Posterior cingulate gyrus (tissue), 11 donors: ENCODE measurements at regions of chr12 and their contacts with region 1.

Region 1: GRCh38 chr12:118821386-118821925 is 159.9 kb upstream of the SRRM4 start:
- DNase-seq: no peak

Region 2: DNA sequence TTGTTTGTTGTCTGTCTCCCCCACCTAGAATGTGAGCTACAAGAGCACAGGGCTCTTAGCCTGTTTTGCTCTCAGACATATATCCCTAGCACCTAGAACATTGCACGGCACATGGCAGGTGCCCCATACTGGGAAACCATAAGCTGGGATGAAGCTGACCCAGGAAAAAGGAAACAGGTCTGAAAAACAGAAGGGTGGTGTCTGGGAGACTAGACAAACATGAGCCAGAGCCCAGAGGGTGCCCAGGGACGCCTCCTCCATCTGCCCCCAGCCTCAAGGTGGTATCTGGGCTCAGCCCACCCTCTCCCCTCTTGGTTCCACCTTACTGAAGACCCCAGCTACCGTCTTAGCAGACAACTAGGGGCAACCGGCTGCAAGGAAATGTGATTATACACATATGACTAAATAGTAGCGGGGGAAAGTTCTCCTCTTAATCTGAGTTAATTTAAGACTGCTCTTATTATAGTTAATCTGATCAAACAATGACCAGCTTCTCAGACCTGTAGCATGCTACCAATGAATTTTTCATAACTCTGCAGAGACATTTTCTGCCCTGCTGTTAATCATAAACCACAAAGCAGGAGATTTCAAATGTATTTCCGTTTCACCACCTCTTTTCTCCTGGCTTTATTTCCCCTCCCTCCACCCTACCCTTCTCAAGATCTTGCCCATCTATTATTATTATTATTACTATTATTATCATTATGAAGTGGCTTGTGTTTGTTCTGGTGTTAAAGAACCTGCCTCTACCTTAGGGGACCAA is 884.6 kb before region 1 on chr12:
- intact Hi-C with region 1: no loop called
- DNase-seq: no peak

Region 3: DNA sequence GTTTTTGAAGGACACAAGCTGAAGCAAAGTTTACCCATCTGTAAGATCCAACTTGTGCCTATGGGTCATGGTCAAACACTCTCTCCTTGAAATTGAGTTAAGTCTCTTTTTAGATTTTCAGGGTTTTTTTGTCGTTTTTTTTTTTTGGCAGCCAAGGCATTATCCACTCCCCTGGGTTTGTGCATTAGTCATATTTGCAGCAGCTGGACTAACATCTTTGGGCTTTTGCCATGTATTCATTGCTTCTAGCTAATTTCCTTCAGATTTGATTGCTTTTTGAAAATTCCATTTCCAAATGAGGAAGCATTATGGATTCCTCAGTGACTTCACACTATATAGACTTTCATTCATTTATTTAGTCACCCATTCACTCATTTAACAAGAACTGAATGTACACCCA is 79.5 kb after region 1 on chr12:
- intact Hi-C with region 1: no loop called
- DNase-seq: no peak

Region 4: GRCh38 chr12:119036878-119037825 is 215.7 kb after region 1 on chr12:
- intact Hi-C with region 1: loop called (anchors 10 kb)
- DNase-seq: peak in 3 of 10 donors; percentile 24 to 43 (median 31)

Region 5: GRCh38 chr12:119169147-119169546 is 347.7 kb after region 1 on chr12:
- intact Hi-C with region 1: no loop called
- DNase-seq: no peak